ENCODE measurements at regions of chr1 and their contacts with region 1.

Region 1: DNA sequence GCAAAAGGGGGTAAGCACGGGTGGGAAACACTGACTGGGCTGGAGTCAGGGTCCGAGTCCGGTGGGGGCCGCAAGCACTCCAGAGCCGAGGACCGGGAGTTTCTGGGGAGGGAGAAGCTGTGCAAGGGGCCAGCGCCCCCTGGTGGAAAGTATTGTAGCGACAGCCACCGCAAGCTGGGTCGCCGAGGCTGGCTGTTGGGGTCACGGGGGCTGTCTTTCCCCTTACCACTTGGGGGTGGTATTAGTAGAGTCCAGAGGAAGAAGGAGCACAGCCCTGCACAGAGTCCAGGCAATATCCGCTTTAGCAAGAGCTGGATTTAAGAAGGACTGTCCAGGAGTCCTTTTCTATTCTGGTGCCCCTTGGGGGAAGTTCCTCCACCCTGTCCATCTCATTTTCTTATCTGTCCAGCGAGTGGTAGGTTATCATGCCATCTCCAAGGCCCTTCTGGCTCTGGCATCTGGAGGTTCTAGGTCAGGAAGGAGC is 17.9 kb upstream of the ETV3 start:
- DNase-seq: peak; percentile 78
- H3K4me3 Mint-ChIP-seq: peak overlapping the region; percentile 63
- H3K27ac Mint-ChIP-seq: peak overlapping the region; percentile 33
- H3K4me1 Mint-ChIP-seq: peaks cover 40% of the 10 kb centered on the region
- H3K27me3 Mint-ChIP-seq: no peaks in the 10 kb centered on the region
- CTCF ChIP-seq: peak; percentile 99

Region 2: GRCh38 chr1:156262461-156263287 is 893.4 kb before region 1 on chr1:
- CTCF ChIA-PET with region 1: no interaction called
- POLR2A ChIA-PET with region 1: no interaction called
- intact Hi-C with region 1: no loop called
- DNase-seq: peak; percentile 90
- H3K4me3 Mint-ChIP-seq: peak overlapping the region; percentile 13
- H3K27ac Mint-ChIP-seq: peak overlapping the region; percentile 92
- H3K4me1 Mint-ChIP-seq: peaks cover 40% of the 10 kb centered on the region
- H3K27me3 Mint-ChIP-seq: no peaks in the 10 kb centered on the region
- CTCF ChIP-seq: no peak

Region 3: DNA sequence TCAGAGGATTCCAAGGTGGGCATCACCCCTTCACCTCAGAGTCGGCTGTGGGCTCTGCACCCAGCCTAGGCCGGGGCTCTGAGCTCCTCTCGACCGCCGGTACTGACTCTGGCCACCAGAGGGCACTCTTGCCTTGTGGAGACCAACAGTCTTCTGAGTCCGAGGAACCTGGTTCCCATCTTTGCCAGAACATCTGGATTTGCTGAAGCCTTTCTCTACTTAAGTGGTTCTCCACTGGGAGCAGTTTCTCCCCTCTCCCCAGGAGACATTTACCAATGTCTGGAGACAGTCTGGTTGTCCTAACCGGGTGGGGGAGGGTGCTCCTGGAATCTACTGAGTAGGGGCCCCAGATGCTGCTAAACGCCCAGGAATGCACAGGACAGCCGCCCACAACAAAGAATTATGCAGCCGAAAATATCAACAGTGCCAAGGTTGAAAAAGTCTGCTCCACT is 65.9 kb before region 1 on chr1:
- CTCF ChIA-PET with region 1: interaction called, 805 read pairs
- POLR2A ChIA-PET with region 1: interaction called, 42 read pairs
- intact Hi-C with region 1: loop called (anchors 1 kb)
- DNase-seq: peak; percentile 90
- H3K4me3 Mint-ChIP-seq: no peak overlapping the region
- H3K27ac Mint-ChIP-seq: no peak overlapping the region
- H3K4me1 Mint-ChIP-seq: peaks cover 17% of the 10 kb centered on the region
- H3K27me3 Mint-ChIP-seq: no peaks in the 10 kb centered on the region
- CTCF ChIP-seq: peak; percentile 99

Region 4: GRCh38 chr1:157124855-157125254 is 31.2 kb before region 1 on chr1:
- CTCF ChIA-PET with region 1: interaction called, 419 read pairs
- POLR2A ChIA-PET with region 1: no interaction called
- intact Hi-C with region 1: no loop called
- DNase-seq: peak; percentile 17
- H3K4me3 Mint-ChIP-seq: no peak overlapping the region
- H3K27ac Mint-ChIP-seq: no peak overlapping the region
- H3K4me1 Mint-ChIP-seq: no peaks in the 10 kb centered on the region
- H3K27me3 Mint-ChIP-seq: no peaks in the 10 kb centered on the region
- CTCF ChIP-seq: no peak

Region 5: GRCh38 chr1:157176591-157177121 is 20.6 kb after region 1 on chr1:
- CTCF ChIA-PET with region 1: interaction called, 17 read pairs
- POLR2A ChIA-PET with region 1: no interaction called
- intact Hi-C with region 1: no loop called
- DNase-seq: no peak
- H3K4me3 Mint-ChIP-seq: no peak overlapping the region
- H3K27ac Mint-ChIP-seq: no peak overlapping the region
- H3K4me1 Mint-ChIP-seq: no peaks in the 10 kb centered on the region
- H3K27me3 Mint-ChIP-seq: peaks cover 89% of the 10 kb centered on the region
- CTCF ChIP-seq: no peak

Region 6: GRCh38 chr1:157226739-157227138 is 70.6 kb after region 1 on chr1:
- CTCF ChIA-PET with region 1: no interaction called
- POLR2A ChIA-PET with region 1: no interaction called
- intact Hi-C with region 1: no loop called
- DNase-seq: no peak
- H3K4me3 Mint-ChIP-seq: no peak overlapping the region
- H3K27ac Mint-ChIP-seq: no peak overlapping the region
- H3K4me1 Mint-ChIP-seq: no peaks in the 10 kb centered on the region
- H3K27me3 Mint-ChIP-seq: peaks cover 43% of the 10 kb centered on the region
- CTCF ChIP-seq: no peak

Region 7: GRCh38 chr1:157369808-157370521 is 213.9 kb after region 1 on chr1:
- CTCF ChIA-PET with region 1: interaction called, 17 read pairs
- POLR2A ChIA-PET with region 1: no interaction called
- intact Hi-C with region 1: no loop called
- DNase-seq: peak; percentile 80
- H3K4me3 Mint-ChIP-seq: no peak overlapping the region
- H3K27ac Mint-ChIP-seq: no peak overlapping the region
- H3K4me1 Mint-ChIP-seq: peaks cover 4% of the 10 kb centered on the region
- H3K27me3 Mint-ChIP-seq: peaks cover 16% of the 10 kb centered on the region
- CTCF ChIP-seq: peak; percentile 99